ENCODE measurements at regions of chr11 and their contacts with region 1.

Region 1: DNA sequence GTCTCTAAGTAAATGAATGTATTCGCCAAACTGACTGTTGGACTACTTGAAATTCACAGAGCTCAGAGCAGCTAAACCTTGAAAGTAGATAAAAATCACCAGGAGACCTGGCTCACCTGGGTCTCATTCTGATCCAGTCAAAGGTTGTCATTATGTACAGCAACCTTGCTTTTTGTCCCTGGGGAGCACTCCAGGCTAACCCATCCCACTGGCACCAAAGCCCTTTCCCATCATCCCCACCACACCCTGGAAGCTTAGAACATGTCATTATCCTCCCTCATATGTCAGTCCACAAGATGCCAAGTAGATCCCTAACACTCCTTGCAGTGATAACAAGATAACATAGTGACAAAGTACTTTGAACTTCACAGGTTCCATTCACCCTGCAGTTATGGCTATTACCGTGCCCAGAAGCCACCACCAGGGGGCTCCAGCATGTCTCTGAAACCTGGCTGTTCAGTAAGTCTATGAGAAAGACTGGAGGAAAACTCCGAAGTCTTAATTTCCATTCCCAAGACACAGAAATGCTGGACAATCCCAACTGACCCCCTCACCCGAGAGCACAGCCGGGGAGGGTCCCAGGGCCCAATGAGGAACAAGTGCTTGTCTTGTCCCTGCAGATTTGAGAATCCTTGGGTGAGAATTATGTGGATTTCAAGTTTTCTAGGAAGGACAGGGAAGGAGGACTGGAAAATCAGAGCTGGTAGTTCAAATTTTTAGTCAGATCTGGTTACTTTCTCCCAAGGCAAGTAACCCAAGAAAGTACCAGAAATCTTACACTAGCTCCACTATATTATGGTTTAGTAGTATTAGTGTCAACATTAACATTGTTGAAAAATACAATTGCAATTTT is 43.0 kb upstream of the USP47 start:
- DNase-seq: peak; percentile 11 to 77
- ATAC-seq: peak; percentile 77 to 95
- H3K4me3 ChIP-seq: no peak overlapping the region
- H3K27ac ChIP-seq: no peak overlapping the region
- H3K4me1 ChIP-seq: no peaks in the 10 kb centered on the region
- H3K27me3 ChIP-seq: no peaks in the 10 kb centered on the region
- CTCF ChIP-seq: peak; percentile 68 to 91 (median 89)
- POLR2A ChIP-seq: no peak

Region 2: DNA sequence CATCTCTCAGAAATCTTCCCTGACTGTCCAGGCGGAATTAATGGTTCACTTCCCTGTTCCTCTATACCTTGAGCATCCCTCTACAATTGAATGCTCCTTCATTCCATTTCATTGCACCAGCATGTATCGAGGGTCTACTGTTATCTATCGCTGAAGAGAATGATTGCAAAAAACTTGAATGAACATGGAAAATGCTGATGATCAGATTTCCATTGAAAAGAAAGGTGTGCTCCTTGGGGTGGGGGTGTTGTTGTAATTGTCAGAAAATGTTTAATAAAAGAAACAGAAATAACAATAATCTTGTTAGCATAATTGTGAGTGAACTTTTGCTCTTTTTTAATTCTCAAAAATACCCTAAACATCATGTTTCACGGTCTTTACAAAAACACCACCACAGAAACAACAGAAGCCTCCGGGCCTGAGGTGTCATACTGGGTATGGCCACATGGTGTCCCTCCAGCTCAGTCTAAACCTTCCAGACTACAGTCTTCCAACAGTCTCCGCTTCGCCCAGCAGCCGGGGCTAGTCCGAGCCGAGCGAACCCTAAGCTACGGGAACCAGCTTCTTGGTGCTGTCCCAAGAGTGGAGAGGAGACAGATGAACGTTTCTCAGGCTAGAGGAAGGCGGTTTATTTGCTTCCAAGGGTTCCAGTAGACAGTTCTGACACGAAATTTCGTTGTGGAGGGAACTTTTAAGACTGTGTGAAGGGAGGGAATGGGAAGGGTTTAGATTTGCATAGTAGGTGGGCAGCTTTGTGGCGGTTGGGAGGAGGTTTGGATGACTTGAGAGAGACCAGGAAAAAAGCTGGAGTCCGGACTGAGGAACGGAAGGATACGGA is 865.1 kb before region 1 on chr11:
- in situ Hi-C with region 1: loop called in 2 of 4 experiments (anchors 10 to 25 kb)
- intact Hi-C with region 1: no loop called
- DNase-seq: peak; percentile 80 to 85
- ATAC-seq: peak; percentile 78 to 84
- H3K4me3 ChIP-seq: peak overlapping the region; percentile 45 to 65 (median 54)
- H3K27ac ChIP-seq: peak overlapping the region; percentile 64 to 84 (median 67)
- H3K4me1 ChIP-seq: peaks cover 6 to 7% of the 10 kb centered on the region in 2 donors
- H3K27me3 ChIP-seq: no peaks in the 10 kb centered on the region
- CTCF ChIP-seq: peak; percentile 92 to 98 (median 94)
- POLR2A ChIP-seq: no peak

Region 3: DNA sequence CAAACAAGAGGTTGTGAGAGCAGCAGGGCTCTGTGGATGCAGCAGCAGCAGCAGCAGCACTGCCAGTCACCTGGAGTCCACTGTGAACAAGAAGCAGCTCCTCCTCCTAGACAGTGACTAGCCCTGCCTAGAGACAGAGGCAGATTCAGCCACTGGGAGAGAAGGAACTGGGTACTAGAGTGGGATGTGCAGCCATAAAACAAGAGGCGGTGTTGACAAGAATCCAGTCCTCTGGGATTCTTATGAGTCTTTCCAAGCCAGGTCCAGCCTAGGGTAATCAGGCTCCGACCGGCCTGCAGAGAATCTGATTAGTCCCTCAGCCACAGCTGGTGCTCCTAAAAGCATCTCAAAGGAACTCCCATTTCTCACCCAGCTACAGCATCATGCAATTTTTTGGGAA is 40.9 kb before region 1 on chr11:
- in situ Hi-C with region 1: no loop called
- intact Hi-C with region 1: no loop called
- DNase-seq: no peak
- ATAC-seq: no peak
- H3K4me3 ChIP-seq: no peak overlapping the region
- H3K27ac ChIP-seq: no peak overlapping the region
- H3K4me1 ChIP-seq: no peaks in the 10 kb centered on the region
- H3K27me3 ChIP-seq: no peaks in the 10 kb centered on the region
- CTCF ChIP-seq: no peak
- POLR2A ChIP-seq: no peak

Region 4: GRCh38 chr11:11848891-11849746 is 50.3 kb after region 1 on chr11:
- in situ Hi-C with region 1: no loop called
- intact Hi-C with region 1: loop called (anchors 1 kb)
- DNase-seq: peak; percentile 36 to 63
- ATAC-seq: peak; percentile 72 to 89
- H3K4me3 ChIP-seq: peak overlapping the region in 1 of 4 donors; percentile 3
- H3K27ac ChIP-seq: peak overlapping the region; percentile 6 to 99 (median 78)
- H3K4me1 ChIP-seq: peaks cover 89 to 95% of the 10 kb centered on the region in 2 donors
- H3K27me3 ChIP-seq: no peaks in the 10 kb centered on the region
- CTCF ChIP-seq: peak; percentile 27 to 62 (median 55)
- POLR2A ChIP-seq: no peak

Region 5: GRCh38 chr11:11895672-11896071 is 96.9 kb after region 1 on chr11:
- in situ Hi-C with region 1: no loop called
- intact Hi-C with region 1: loop called (anchors 1 kb)
- DNase-seq: no peak
- ATAC-seq: no peak
- H3K4me3 ChIP-seq: no peak overlapping the region
- H3K27ac ChIP-seq: no peak overlapping the region
- H3K4me1 ChIP-seq: peaks cover 0 to 4% of the 10 kb centered on the region in 2 donors
- H3K27me3 ChIP-seq: no peaks in the 10 kb centered on the region
- CTCF ChIP-seq: no peak
- POLR2A ChIP-seq: no peak

Region 6: GRCh38 chr11:11966826-11967668 is 168.2 kb after region 1 on chr11:
- in situ Hi-C with region 1: no loop called
- intact Hi-C with region 1: loop called (anchors 2 kb)
- DNase-seq: peak; percentile 31 to 67
- ATAC-seq: peak; percentile 45 to 76
- H3K4me3 ChIP-seq: no peak overlapping the region
- H3K27ac ChIP-seq: no peak overlapping the region
- H3K4me1 ChIP-seq: peaks cover 0 to 3% of the 10 kb centered on the region in 2 donors
- H3K27me3 ChIP-seq: no peaks in the 10 kb centered on the region
- CTCF ChIP-seq: peak; percentile 57 to 83 (median 60)
- POLR2A ChIP-seq: no peak

Region 7: GRCh38 chr11:12281571-12282478 is 483.0 kb after region 1 on chr11:
- in situ Hi-C with region 1: loop called in 2 of 4 experiments (anchors 5 to 25 kb)
- intact Hi-C with region 1: loop called (anchors 2 kb)
- DNase-seq: peak; percentile 61 to 74
- ATAC-seq: peak; percentile 73 to 88
- H3K4me3 ChIP-seq: no peak overlapping the region
- H3K27ac ChIP-seq: no peak overlapping the region
- H3K4me1 ChIP-seq: peaks cover 3 to 4% of the 10 kb centered on the region in 2 donors
- H3K27me3 ChIP-seq: no peaks in the 10 kb centered on the region
- CTCF ChIP-seq: peak; percentile 95 to 97 (median 97)
- POLR2A ChIP-seq: no peak

Measured in gastrocnemius medialis (tissue), 4 donors.